ENCODE measurements at regions of chr12 and their contacts with region 1.

Region 1: DNA sequence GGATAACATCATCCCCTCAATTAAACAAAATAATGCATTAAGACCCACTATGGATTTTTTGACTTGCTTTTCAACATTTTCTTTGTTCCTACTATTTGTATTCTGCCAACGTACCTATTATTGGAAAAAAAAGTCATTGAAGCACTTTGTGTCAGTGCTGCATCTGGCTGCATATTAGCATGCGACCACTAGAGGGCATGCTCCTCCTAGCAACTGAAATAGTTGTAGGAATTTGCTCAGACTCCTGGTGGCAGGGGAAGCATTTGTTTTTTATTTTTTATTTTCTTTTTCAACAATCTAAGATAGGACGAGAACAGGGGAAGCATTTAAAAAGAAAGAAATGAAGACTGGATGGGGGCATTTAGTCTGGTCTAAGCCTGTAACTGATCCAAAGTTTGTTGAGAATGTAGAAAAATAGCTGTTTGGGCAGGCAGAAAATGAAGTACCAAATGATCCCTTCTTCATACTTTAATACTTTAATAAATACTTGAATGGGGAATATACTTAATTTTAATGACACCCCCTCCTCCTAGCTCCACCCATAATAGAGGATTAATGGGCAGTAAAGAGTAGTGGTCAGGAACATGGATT is 14.5 kb upstream of the CLEC4A start:
- DNase-seq: peak; percentile 71
- CTCF ChIP-seq: peak; percentile 94

Region 2: GRCh38 chr12:8226355-8226754 is 117.5 kb after region 1 on chr12:
- in situ Hi-C with region 1: loop called (anchors 10 kb)
- DNase-seq: no peak
- CTCF ChIP-seq: no peak